ENCODE measurements at regions of chr3 and their contacts with region 1.

Region 1: DNA sequence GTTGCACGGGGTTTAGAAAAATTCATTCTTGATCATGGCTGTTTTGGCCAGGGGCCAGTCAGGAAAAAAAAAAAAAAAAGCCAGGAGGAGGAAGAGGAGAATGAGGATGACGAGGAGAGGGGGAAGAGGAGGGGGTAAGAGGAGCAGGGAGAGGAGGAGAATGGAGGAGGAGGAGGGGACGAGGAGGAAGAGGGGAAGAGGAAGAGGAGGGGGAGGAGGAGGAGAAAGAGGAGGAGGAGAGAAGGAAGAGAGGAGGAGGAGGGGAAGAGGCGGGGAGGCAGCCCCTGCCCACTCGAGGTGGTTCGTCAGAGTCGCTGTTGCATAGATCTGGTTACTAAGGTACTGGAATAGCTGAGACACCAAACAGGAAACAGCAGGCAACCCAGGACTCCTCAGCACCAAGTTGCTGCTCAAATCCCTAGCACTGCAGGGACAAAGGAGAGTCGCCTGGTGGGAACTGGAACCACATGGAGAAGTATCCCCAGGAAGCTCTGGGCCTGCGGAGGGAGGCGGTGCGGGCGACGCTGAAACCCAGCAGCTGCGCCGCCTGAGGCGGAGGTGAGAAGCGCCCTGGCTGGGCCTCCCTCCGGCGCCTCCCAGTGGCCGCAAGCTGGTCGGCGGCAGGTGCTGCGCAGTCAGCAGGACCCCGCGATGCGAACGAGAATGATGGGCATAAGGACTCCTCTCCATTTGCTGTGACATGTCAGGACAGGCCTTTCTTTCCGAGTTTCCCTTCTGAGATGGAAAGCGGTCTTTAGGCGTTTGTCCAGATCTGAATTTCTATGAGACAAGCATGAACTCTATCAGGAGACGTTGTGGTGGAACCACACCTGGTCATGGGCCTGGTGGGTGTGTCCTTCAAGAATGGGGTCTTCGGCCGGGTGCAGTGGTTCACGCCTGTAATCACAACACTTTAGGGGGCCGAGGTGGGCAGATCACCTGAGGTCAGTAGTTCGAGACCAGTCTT is 17.5 kb downstream of the FAM240A start:
- DNase-seq: peak; percentile 86
- CTCF ChIP-seq: peak; percentile 97

Region 2: DNA sequence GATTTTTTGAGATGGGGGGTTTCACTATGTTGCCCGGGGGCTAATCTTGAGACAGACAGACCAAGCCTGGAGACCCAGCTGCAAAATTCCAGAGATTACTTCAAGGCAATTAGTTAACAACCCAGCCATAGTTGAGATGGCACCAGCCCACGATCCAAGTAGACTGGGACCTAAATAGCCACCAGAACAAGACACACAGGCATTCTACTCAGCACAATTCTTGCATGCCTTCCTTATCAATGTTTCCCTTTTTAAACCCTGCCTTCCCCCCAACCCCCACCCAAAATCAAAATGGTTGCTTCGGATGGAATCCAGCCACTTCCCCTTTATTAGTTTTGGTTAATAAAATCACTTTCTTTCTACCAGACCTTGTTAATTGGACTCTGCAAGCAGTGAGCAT is 11.1 kb after region 1 on chr3:
- CTCF ChIA-PET with region 1: interaction called, 21 read pairs
- POLR2A ChIA-PET with region 1: no interaction called
- DNase-seq: no peak
- CTCF ChIP-seq: no peak

Region 3: DNA sequence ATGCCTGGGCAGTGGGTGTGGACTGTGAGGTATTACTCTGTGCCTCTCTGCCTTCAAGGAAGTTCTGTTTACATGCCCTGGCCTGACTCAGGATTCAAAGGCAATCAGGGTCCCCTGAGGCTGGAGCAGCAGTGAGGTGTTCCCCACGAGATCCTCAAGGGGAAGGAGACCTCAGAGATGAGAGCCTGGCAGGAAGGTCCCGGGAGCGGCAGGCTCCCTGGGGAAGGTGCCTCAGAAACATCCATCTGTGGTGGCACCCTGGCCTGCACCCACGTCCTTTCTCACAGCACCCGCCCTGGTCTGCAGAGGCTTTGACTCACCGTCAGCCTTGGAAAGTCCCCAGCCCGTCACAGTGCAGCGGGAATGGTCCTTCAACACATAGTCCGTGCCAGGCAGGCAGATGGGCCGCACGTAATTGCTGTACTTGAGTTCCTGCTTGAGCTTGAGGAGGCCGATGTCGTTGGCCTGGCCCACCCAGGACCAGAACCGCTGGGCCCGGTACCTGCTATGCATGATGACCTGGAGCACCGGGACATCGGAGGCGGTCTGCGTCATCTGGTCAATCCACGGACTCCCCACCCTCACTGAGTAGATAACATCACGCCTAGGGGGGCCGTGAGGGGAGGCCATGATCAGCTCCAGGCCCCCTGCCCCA is 84.2 kb after region 1 on chr3:
- CTCF ChIA-PET with region 1: no interaction called
- POLR2A ChIA-PET with region 1: no interaction called
- DNase-seq: peak; percentile 76
- CTCF ChIP-seq: no peak

Region 4: DNA sequence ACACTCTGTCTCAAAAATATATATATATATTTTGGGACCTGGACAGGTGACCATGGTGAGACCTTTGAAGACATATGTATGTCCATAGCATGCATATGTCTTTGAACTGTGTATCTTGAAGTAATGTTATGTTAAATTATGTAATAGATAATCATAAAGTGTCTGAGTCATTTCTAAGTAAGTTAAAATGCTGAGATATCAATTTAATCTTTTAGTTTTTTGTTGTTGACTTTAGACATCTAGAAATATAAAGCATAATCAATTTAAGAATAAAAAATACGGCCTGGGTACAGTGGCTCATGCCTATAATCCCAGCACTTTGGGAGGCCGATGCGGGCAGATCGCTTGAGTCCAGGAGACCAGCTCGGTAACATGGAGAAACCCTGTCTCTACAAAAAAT is 546.7 kb after region 1 on chr3:
- CTCF ChIA-PET with region 1: no interaction called
- POLR2A ChIA-PET with region 1: no interaction called
- DNase-seq: no peak
- CTCF ChIP-seq: no peak